ENCODE measurements at regions of chr2 and their contacts with region 1.

Region 1: GRCh38 chr2:38465789-38466127 is 88.7 kb upstream of the ATL2 start:
- DNase-seq: peak; percentile 55 to 77
- H3K4me3 ChIP-seq: no peak overlapping the region
- H3K27ac ChIP-seq: peak overlapping the region in 4 of 5 donors; percentile 73 to 86 (median 74)
- H3K4me1 ChIP-seq: peaks cover 7 to 69% (median 31%) of the 10 kb centered on the region in 4 donors
- H3K27me3 ChIP-seq: no peaks in the 10 kb centered on the region
- CTCF ChIP-seq: peak in 5 of 7 experiments; percentile 11 to 45 (median 36)
- EP300 ChIP-seq: no peak
- POLR2A ChIP-seq: no peak

Region 2: DNA sequence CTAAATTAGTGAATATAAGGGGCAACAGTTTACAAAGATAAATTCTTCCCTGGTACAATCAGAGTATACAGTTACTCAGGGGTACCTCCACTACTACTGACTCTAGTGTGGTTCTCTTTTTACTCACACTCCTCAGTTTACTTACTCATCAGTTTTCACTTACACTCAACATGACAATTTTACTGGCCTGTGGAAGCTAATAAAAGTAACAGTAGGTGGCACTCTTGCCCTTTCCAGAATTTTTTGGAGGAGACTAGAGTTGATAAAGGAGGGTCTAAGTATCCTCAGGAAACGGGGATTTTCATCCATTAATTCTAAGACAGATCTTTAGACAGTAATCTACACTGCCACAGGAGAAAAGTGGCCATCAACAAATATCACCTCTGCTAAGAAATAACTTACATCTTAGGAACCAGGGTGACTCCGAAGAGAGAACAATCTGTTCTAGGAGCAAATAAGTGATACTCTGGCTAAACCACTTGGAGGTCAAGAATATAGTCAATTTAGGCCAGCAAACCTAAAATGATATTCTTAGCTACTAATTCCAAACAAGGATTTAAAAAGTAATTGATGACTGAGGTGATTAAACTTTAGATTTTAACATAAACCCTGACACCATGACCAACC is 149.9 kb before region 1 on chr2:
- intact Hi-C with region 1: loop called (anchors 10 kb)
- DNase-seq: peak in 1 of 2 donors; percentile 74
- H3K4me3 ChIP-seq: no peak overlapping the region
- H3K27ac ChIP-seq: peak overlapping the region in 1 of 5 donors; percentile 59
- H3K4me1 ChIP-seq: peaks cover 0 to 39% (median 17%) of the 10 kb centered on the region in 4 donors
- H3K27me3 ChIP-seq: no peaks in the 10 kb centered on the region
- CTCF ChIP-seq: peak in 5 of 7 experiments; percentile 43 to 60 (median 56)
- EP300 ChIP-seq: no peak
- POLR2A ChIP-seq: no peak